Activated CD8-positive, alpha-beta memory T cell treated with anti-CD3 and anti-CD28 coated beads, Interleukin-2, amount 10 ng/mL, durations not matched to agents 7 days and 5 days (primary cell): ENCODE measurements at regions of chr5 and their contacts with region 1.

Region 1: DNA sequence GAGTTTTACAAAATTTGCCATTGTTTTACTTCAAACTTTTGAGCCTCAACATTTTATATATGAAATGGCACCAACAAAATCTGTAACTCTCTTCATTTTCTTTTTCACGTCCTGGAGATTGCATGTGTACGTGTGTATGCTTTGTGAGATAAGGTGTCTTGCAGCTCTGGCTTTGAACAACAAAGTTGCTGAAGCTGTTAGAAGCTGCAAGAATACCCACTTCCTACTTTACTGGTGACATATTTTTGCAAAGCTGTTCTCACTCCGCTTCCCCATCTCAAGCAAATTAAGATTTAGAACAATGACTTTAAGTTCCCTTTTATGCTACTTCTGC is 41.8 kb downstream of the FYB1 start:
- DNase-seq: no peak
- ATAC-seq: peak; percentile 49
- H3K4me3 Mint-ChIP-seq: peak overlapping the region; percentile 68
- H3K27ac Mint-ChIP-seq: peak overlapping the region; percentile 90
- H3K4me1 Mint-ChIP-seq: peaks cover 95% of the 10 kb centered on the region
- H3K27me3 Mint-ChIP-seq: no peaks in the 10 kb centered on the region

Region 2: DNA sequence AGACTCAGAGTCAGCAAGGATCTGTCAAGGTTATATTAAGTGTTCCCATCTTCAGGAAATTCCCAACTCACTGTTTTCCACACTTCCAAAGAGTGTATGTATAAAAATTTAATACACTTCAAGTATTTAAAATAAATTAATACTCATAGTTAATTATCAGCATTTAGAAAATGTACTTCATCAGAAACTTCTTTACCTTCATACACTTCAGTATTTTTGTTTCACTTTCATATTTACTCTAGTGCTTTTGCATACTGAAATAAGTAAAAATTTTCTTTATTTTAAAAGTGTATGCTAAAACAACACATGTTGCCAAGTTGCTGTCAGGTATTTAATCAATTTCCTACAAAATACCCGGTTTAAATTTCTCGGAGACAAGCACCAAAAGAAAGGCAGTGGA is 119.9 kb before region 1 on chr5:
- CTCF ChIA-PET with region 1: no interaction called
- DNase-seq: no peak
- ATAC-seq: peak; percentile 42
- H3K4me3 Mint-ChIP-seq: peak overlapping the region; percentile 48
- H3K27ac Mint-ChIP-seq: peak overlapping the region; percentile 49
- H3K4me1 Mint-ChIP-seq: peaks cover 24% of the 10 kb centered on the region
- H3K27me3 Mint-ChIP-seq: no peaks in the 10 kb centered on the region

Region 3: DNA sequence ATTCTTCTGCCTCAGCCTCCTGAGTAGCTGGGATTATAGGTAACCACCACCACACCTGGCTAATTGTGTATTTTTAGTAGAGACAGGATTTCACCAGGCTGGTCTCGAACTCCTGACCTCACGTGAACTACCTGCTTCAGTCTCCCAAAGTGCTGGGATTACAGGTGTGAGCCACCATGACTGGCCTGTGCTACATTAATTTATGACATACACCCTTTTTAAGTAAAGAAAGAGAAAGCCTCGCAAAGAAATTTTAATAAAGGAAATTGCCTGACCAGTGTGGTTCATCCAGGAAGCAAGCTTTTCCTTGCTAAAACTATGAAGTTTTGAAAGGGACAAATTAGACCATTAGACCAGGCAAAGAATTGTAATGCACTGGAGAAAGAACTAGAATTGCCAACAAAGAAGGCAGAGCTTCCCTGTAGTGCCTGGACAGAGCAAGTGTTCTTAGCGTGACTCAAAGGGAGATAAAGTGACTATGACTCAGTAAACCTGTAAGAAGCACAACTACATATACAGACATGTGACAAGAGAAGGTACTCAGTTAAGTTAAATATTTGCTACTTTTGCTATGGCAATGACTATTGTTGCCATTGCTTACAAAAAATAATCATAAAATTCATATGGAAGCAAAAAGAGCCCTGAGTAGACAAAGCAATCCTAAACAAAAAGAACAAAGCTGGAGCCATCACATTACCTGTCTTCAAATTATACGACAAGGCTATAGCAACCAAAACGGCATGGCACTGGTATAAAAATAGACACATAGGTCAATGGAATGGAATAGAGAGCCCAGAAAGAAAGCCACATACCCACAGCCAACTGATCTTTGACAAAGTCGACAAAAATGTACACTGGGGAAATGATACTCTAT is 12.8 kb before region 1 on chr5:
- CTCF ChIA-PET with region 1: interaction called, 14 read pairs
- DNase-seq: peak; percentile 57
- ATAC-seq: peak; percentile 93
- H3K4me3 Mint-ChIP-seq: peak overlapping the region; percentile 48
- H3K27ac Mint-ChIP-seq: peak overlapping the region; percentile 90
- H3K4me1 Mint-ChIP-seq: peaks cover 80% of the 10 kb centered on the region
- H3K27me3 Mint-ChIP-seq: no peaks in the 10 kb centered on the region

Region 4: GRCh38 chr5:39194466-39195136 is 17.0 kb after region 1 on chr5:
- CTCF ChIA-PET with region 1: interaction called, 91 read pairs
- DNase-seq: peak; percentile 55
- ATAC-seq: peak; percentile 16
- H3K4me3 Mint-ChIP-seq: peak overlapping the region; percentile 74
- H3K27ac Mint-ChIP-seq: peak overlapping the region; percentile 79
- H3K4me1 Mint-ChIP-seq: peaks cover 74% of the 10 kb centered on the region
- H3K27me3 Mint-ChIP-seq: no peaks in the 10 kb centered on the region

Region 5: DNA sequence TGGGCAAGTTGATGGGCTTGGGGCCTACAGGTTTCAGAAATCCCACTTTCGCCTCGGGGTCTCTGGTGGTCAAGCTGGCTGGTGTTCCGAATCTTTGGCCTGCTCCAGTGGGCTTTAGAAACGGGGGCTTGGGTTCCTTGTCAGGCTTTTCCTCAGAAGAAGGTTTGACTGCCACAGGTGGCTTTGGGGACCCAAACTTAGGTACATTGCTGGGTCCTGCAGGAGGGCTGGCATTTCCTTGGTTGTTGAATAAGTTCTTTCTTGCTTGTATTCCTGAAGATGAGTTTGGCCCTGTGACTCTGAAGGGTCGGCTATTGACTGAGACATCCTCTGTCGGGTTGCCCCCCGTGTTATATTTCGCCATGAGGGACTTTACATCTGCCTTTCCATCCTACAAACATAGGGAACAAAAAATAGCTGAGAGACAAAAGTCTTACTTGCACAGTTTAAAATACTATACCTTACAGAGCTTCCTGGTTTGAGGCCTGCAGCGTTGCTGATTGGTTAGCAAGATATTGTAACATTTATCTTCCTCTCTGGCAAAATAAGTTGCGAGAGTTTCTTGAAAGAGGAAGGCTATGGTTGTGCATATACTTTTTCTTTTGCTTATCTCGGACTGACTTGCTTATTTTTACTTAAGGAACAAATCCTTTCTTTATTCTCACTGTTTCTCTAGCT is 25.1 kb after region 1 on chr5:
- CTCF ChIA-PET with region 1: interaction called, 10 read pairs
- DNase-seq: peak; percentile 68
- ATAC-seq: peak; percentile 55
- H3K4me3 Mint-ChIP-seq: peak overlapping the region; percentile 97
- H3K27ac Mint-ChIP-seq: peak overlapping the region; percentile 95
- H3K4me1 Mint-ChIP-seq: peaks cover 43% of the 10 kb centered on the region
- H3K27me3 Mint-ChIP-seq: no peaks in the 10 kb centered on the region

Region 6: GRCh38 chr5:39253196-39253595 is 75.6 kb after region 1 on chr5:
- CTCF ChIA-PET with region 1: no interaction called
- DNase-seq: no peak
- ATAC-seq: no peak
- H3K4me3 Mint-ChIP-seq: no peak overlapping the region
- H3K27ac Mint-ChIP-seq: no peak overlapping the region
- H3K4me1 Mint-ChIP-seq: peaks cover 14% of the 10 kb centered on the region
- H3K27me3 Mint-ChIP-seq: no peaks in the 10 kb centered on the region